PC-9 (cell line): ENCODE measurements at regions of chr4 and their contacts with region 1.

Region 1: GRCh38 chr4:143375313-143376073 is 38.8 kb downstream of the GAB1 start:
- DNase-seq: no peak
- H3K4me3 ChIP-seq: no peak overlapping the region
- H3K27ac ChIP-seq: no peak overlapping the region
- H3K4me1 ChIP-seq: no peaks in the 10 kb centered on the region
- H3K27me3 ChIP-seq: no peaks in the 10 kb centered on the region
- CTCF ChIP-seq: 0 out of 2 replicates have a peak, but pooled peaks have one; percentile 25

Region 2: DNA sequence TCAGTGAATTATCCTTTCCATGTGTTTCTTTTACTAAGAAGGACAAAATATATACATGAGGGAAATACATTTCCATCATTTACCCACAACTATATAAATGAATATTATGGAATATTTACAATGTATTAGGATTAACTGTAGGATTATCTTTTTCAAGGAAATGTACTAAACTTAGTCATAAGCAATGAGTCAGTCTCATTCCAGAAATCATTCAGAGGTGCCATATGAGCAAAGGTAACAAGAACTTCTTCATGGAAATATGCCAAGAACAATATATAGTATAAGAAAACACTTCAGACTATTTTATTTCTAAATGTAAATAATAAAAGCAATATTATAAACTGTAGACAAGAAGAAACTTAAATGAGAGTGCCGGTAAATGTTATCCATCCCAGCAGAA is 123.7 kb before region 1 on chr4:
- CTCF ChIA-PET with region 1: no interaction called
- POLR2A ChIA-PET with region 1: no interaction called
- intact Hi-C with region 1: no loop called
- DNase-seq: peak in 1 of 2 experiments; percentile 75
- H3K4me3 ChIP-seq: no peak overlapping the region
- H3K27ac ChIP-seq: no peak overlapping the region
- H3K4me1 ChIP-seq: peaks cover 15% of the 10 kb centered on the region
- H3K27me3 ChIP-seq: no peaks in the 10 kb centered on the region
- CTCF ChIP-seq: no peak

Region 3: GRCh38 chr4:143389579-143390195 is 14.2 kb after region 1 on chr4:
- CTCF ChIA-PET with region 1: interaction called, 13 read pairs
- POLR2A ChIA-PET with region 1: no interaction called
- intact Hi-C with region 1: no loop called
- DNase-seq: peak in 1 of 2 experiments; percentile 64
- H3K4me3 ChIP-seq: no peak overlapping the region
- H3K27ac ChIP-seq: peak overlapping the region; percentile 19; the same call in 1 of the 2 replicates
- H3K4me1 ChIP-seq: peaks cover 17% of the 10 kb centered on the region
- H3K27me3 ChIP-seq: no peaks in the 10 kb centered on the region
- CTCF ChIP-seq: no peak